SK-N-SH (cell line): ENCODE measurements at regions of chr1 and their contacts with region 1.

Region 1: DNA sequence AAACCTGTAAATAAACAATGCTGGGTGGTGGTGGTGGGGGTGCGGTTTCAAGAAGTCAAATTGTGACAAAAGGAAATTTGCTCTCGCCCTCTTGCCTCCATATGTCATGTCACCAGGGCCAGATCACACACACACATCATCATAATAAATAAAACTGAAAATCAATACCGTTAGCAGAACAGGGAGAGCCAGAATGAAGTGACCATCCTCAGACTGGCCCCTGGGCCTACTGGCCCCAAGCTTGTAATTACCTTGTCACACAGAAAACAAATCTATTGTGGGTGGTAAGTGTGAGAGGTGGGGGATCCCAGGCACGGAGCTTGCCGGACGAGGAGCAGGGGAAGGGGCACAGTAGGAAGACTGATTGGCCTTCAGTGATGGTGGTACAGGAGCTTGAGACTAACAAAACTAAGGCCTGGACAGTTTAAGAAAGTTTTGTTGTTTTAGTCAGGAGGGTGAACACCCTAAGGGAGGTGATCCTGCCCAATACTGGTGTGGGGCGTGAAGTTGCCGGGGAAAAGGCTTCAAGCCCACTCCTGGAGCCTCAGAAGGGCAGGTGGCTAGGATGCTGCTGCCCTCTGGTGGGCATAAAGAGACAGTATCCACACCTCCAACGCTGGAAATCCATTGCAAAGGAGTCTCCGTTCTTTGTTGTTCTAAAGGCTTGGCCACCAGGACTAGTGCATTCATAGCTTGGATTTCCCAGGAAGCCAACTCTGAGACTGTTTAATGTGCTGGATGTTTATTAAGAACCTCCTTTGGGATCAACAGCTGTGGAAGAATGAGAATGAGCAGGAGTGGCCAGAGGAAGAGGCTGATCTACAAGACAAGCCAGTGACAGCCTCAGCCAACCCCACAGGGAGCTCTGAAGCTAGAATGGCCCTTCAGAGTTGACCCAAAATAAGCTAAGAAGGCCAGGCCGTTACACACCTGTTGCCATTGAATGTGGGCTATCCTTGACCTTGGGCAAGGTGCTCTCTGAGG is 8.1 kb upstream of the C1orf216 start:
- DNase-seq: peak; percentile 76
- H3K4me3 ChIP-seq: no peak overlapping the region; a peak in 1 of 4 replicates
- H3K27ac ChIP-seq: no peak overlapping the region
- H3K4me1 ChIP-seq: no peaks in the 10 kb centered on the region
- H3K27me3 ChIP-seq: no peaks in the 10 kb centered on the region
- CTCF ChIP-seq: peak; percentile 89
- EP300 ChIP-seq: no peak
- RAD21 ChIP-seq: peak; percentile 94

Region 2: GRCh38 chr1:35451125-35451528 is 275.6 kb before region 1 on chr1:
- CTCF ChIA-PET with region 1: interaction called, 42 read pairs
- POLR2A ChIA-PET with region 1: no interaction called
- DNase-seq: peak; percentile 68
- H3K4me3 ChIP-seq: 0 out of 4 replicates have a peak overlapping the region, but pooled peaks of 1 of the 2 experiments have one; percentile 33
- H3K27ac ChIP-seq: peak overlapping the region in 1 of 2 experiments; percentile 61; a peak in 1 of 4 replicates
- H3K4me1 ChIP-seq: peaks cover 15 to 32% of the 10 kb centered on the region in 2 experiments
- H3K27me3 ChIP-seq: no peaks in the 10 kb centered on the region
- CTCF ChIP-seq: peak; percentile 89
- EP300 ChIP-seq: no peak
- RAD21 ChIP-seq: peak; percentile 84

Region 3: GRCh38 chr1:35564037-35564883 is 162.5 kb before region 1 on chr1:
- CTCF ChIA-PET with region 1: interaction called, 347 read pairs
- POLR2A ChIA-PET with region 1: interaction called, 5 read pairs
- DNase-seq: peak; percentile 87
- H3K4me3 ChIP-seq: no peak overlapping the region; a peak in 1 of 4 replicates
- H3K27ac ChIP-seq: no peak overlapping the region
- H3K4me1 ChIP-seq: peaks cover 3 to 5% of the 10 kb centered on the region in 2 experiments; a peak in 1 of 4 replicates
- H3K27me3 ChIP-seq: no peaks in the 10 kb centered on the region
- CTCF ChIP-seq: peak; percentile 82
- EP300 ChIP-seq: no peak
- RAD21 ChIP-seq: peak; percentile 72

Region 4: GRCh38 chr1:35585281-35585680 is 141.5 kb before region 1 on chr1:
- CTCF ChIA-PET with region 1: interaction called, 10 read pairs
- POLR2A ChIA-PET with region 1: no interaction called
- DNase-seq: no peak
- H3K4me3 ChIP-seq: no peak overlapping the region
- H3K27ac ChIP-seq: no peak overlapping the region
- H3K4me1 ChIP-seq: no peaks in the 10 kb centered on the region
- H3K27me3 ChIP-seq: no peaks in the 10 kb centered on the region
- CTCF ChIP-seq: no peak
- EP300 ChIP-seq: no peak
- RAD21 ChIP-seq: no peak

Region 5: DNA sequence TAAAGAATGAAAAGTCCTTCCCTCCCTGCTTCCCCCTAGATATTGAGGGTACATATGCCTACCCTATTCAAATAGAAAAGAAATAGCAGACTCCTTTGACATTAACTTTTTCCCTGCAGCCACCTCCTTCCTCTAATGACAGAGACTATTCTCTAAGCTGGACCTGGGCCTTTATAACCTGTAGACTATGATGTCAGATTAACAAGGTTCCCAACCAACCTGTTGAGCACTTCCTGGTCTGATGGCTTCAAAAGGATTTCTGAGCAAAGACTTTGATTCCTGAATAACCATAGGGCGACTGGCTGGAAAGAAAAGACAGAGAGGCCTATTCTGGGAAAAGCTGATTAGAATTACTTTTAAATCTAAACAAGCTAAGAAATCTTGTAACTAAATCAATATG is 10.4 kb after region 1 on chr1:
- CTCF ChIA-PET with region 1: interaction called, 116 read pairs
- POLR2A ChIA-PET with region 1: interaction called, 8 read pairs
- DNase-seq: no peak
- H3K4me3 ChIP-seq: no peak overlapping the region
- H3K27ac ChIP-seq: no peak overlapping the region
- H3K4me1 ChIP-seq: no peaks in the 10 kb centered on the region
- H3K27me3 ChIP-seq: no peaks in the 10 kb centered on the region
- CTCF ChIP-seq: no peak
- EP300 ChIP-seq: no peak
- RAD21 ChIP-seq: no peak

Region 6: DNA sequence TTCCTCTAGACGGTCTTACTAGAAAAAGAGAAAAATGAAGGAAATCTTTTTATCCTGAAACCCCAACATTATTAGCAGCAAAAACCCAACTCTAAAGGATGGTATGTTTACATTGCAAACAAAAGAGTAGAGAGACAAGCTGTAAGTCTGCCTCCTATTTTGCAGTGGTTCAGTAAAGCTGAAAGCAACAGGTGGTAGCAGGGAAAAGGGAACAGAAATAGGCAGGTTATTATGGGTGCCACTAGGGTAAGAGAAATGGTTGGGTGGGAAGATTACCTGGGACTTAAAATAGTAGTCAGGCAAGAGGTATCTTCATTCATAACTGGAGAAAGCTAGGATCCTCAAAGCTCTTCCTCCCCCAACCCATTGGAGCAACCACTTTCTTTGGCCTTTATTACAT is 29.3 kb after region 1 on chr1:
- CTCF ChIA-PET with region 1: interaction called, 116 read pairs
- POLR2A ChIA-PET with region 1: no interaction called
- DNase-seq: no peak
- H3K4me3 ChIP-seq: no peak overlapping the region
- H3K27ac ChIP-seq: no peak overlapping the region
- H3K4me1 ChIP-seq: no peaks in the 10 kb centered on the region
- H3K27me3 ChIP-seq: no peaks in the 10 kb centered on the region
- CTCF ChIP-seq: no peak
- EP300 ChIP-seq: no peak
- RAD21 ChIP-seq: no peak

Region 7: DNA sequence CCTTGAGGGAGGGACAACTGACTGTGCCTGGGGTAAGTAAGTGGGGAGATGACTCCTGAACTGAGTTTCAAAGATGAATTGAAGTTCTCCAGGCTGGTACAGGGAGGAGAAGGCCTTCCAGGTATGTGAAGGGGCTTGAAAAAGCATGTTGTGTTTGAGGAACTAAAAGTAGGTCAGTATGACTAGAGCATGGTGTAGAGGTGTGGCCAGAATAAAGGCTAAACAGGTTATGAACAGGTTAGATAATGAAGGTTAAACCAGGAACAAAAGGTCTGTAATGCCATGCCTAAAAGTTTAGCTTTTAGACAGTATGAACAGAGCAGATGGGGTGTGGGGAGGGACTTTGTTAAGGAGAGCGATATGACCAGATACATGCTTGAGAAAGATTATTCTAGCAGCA is 50.4 kb after region 1 on chr1:
- CTCF ChIA-PET with region 1: interaction called, 40 read pairs
- POLR2A ChIA-PET with region 1: no interaction called
- DNase-seq: no peak
- H3K4me3 ChIP-seq: no peak overlapping the region
- H3K27ac ChIP-seq: no peak overlapping the region
- H3K4me1 ChIP-seq: no peaks in the 10 kb centered on the region
- H3K27me3 ChIP-seq: no peaks in the 10 kb centered on the region
- CTCF ChIP-seq: no peak
- EP300 ChIP-seq: no peak
- RAD21 ChIP-seq: no peak